Activated CD4-positive, alpha-beta memory T cell treated with anti-CD3 and anti-CD28 coated beads, Interleukin-2, amount 10 ng/mL, durations not matched to agents 7 days and 5 days (primary cell): ENCODE measurements at regions of chr20 and their contacts with region 1.

Region 1: DNA sequence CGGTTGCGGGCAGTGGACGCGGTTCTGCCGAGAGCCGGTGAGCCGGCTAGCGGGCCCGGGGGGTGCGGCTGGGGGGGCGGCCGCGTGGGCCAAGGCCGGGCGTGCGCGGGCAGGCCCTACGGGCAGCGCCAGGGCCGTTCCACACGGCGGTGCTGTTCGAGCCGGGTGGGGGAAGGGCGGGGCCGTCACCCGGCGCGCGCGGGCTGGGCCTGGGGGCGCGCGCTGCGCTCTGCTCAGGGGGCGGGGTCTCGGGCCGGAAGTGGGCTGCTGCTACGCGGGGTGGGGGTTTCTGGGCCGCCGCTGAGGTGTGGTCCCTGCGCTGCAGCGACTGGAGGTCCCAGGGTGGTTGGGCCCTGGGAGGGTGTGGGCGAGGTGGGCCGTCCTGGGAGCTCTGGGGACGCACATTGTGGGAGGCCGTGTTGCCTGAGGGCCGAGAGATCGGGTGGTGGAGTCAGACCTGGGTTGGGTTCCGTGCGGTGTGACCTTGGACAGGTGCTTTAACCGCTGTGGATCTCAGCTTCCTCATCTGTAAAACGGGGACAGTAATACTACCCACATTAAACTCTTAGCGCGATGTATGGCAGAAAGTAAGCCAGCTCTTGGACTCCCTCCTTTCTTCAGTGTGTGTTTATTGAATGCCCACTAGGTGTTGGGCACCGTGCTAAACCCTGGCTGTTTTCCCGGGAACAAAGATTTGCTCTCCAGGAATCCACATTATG is 397 bp downstream of the MAPRE1 start:
- DNase-seq: peak; percentile 82
- H3K4me3 Mint-ChIP-seq: peak overlapping the region; percentile 99
- H3K27ac Mint-ChIP-seq: peak overlapping the region; percentile 98
- H3K4me1 Mint-ChIP-seq: peaks cover 40% of the 10 kb centered on the region
- H3K27me3 Mint-ChIP-seq: no peaks in the 10 kb centered on the region

Region 2: GRCh38 chr20:32830437-32830836 is 10.3 kb after region 1 on chr20:
- CTCF ChIA-PET with region 1: interaction called, 4 read pairs
- POLR2A ChIA-PET with region 1: interaction called, 18 read pairs
- DNase-seq: no peak
- H3K4me3 Mint-ChIP-seq: no peak overlapping the region
- H3K27ac Mint-ChIP-seq: no peak overlapping the region
- H3K4me1 Mint-ChIP-seq: peaks cover 39% of the 10 kb centered on the region
- H3K27me3 Mint-ChIP-seq: no peaks in the 10 kb centered on the region

Region 3: DNA sequence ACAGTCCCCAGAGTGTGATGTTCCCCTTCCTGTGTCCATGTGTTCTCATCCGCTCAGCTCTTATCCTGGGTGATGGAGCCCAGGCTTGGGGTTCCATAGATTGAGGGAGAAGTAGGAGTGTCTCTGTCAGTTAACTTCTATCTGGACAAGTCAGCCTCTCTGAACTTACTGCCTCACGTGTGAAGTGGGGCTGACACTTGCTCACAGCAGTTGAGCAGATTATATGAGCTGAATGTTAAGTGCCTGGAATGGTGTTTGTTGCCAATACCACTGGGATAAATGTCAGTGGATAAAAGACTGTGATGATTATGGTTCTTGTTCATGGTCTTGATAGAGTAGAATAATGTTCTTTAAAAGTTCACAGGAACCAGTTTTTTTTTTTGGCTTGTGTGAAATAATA is 21.5 kb after region 1 on chr20:
- CTCF ChIA-PET with region 1: no interaction called
- POLR2A ChIA-PET with region 1: interaction called, 12 read pairs
- DNase-seq: no peak
- H3K4me3 Mint-ChIP-seq: no peak overlapping the region
- H3K27ac Mint-ChIP-seq: no peak overlapping the region
- H3K4me1 Mint-ChIP-seq: peaks cover 30% of the 10 kb centered on the region
- H3K27me3 Mint-ChIP-seq: no peaks in the 10 kb centered on the region